Activated CD4-positive, alpha-beta T cell treated with anti-CD3 and anti-CD28 coated beads, Interleukin-2, amount 10 ng/mL, durations not matched to agents 24 days and 14 days (primary cell): ENCODE measurements at regions of chr15 and their contacts with region 1.

Region 1: DNA sequence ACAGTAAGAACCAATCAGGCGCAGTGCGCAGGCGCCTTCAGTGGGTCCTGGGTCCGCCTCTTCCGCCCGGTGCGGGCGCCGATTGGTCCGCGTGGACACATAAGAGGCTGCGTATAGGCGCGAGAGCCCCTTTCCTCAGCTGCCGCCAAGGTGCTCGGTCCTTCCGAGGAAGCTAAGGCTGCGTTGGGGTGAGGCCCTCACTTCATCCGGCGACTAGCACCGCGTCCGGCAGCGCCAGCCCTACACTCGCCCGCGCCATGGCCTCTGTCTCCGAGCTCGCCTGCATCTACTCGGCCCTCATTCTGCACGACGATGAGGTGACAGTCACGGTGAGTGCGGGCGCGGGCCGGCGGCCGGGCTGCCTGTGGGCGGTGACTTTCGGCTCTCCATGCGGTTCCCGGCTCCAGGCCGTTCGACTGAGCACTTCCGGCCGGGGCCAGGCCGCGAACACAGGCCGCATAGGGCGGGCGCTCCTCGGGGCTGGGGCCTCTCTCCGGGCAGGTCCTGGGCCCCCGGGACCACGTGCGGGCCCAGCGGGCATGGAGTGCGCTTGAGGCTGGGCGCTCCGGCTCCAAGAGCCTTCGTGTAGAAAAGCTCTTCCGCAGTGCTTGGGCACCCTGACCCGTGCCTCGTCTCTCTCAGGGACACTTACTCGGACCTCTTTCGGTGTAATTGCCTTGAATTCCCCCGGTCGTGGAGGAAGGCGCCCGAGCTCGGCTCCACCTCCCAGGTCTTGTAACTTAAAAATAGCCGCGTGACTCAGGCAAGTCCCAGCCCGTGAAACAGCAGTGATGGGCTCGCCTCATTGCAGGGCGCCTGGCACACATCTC is at the start of gene RPLP1:
- DNase-seq: peak; percentile 99
- H3K4me3 Mint-ChIP-seq: peak within 1 kb of the TSS; percentile 99
- H3K27ac Mint-ChIP-seq: peak within 1 kb of the TSS; percentile 100
- H3K4me1 Mint-ChIP-seq: peaks cover 35% of the 10 kb centered on the region
- H3K27me3 Mint-ChIP-seq: no peaks in the 10 kb centered on the region
- total RNA-seq, gene RPLP1: 1,827 and 1,829 TPM in 2 replicates

Region 2: GRCh38 chr15:69413822-69414700 is 38.8 kb before region 1 on chr15 and contains the start of gene KIF23:
- intact Hi-C with region 1: loop called (anchors 1 kb)
- DNase-seq: peak; percentile 98
- H3K4me3 Mint-ChIP-seq: peak within 1 kb of the TSS; percentile 89
- H3K27ac Mint-ChIP-seq: peak within 1 kb of the TSS; percentile 86
- H3K4me1 Mint-ChIP-seq: peaks cover 33% of the 10 kb centered on the region
- H3K27me3 Mint-ChIP-seq: no peaks in the 10 kb centered on the region
- total RNA-seq, gene KIF23: 36.0 and 40.0 TPM in 2 replicates

Region 3: GRCh38 chr15:69468241-69469121 is 15.6 kb after region 1 on chr15:
- intact Hi-C with region 1: loop called (anchors 2 kb)
- DNase-seq: peak; percentile 93
- H3K4me3 Mint-ChIP-seq: peak overlapping the region; percentile 51
- H3K27ac Mint-ChIP-seq: peak overlapping the region; percentile 79
- H3K4me1 Mint-ChIP-seq: peaks cover 24% of the 10 kb centered on the region
- H3K27me3 Mint-ChIP-seq: peaks cover 17% of the 10 kb centered on the region